Activated CD4-positive, alpha-beta T cell treated with anti-CD3 and anti-CD28 coated beads for 36 hours (primary cell): ENCODE measurements at regions of chr10 and their contacts with region 1.

Region 1: DNA sequence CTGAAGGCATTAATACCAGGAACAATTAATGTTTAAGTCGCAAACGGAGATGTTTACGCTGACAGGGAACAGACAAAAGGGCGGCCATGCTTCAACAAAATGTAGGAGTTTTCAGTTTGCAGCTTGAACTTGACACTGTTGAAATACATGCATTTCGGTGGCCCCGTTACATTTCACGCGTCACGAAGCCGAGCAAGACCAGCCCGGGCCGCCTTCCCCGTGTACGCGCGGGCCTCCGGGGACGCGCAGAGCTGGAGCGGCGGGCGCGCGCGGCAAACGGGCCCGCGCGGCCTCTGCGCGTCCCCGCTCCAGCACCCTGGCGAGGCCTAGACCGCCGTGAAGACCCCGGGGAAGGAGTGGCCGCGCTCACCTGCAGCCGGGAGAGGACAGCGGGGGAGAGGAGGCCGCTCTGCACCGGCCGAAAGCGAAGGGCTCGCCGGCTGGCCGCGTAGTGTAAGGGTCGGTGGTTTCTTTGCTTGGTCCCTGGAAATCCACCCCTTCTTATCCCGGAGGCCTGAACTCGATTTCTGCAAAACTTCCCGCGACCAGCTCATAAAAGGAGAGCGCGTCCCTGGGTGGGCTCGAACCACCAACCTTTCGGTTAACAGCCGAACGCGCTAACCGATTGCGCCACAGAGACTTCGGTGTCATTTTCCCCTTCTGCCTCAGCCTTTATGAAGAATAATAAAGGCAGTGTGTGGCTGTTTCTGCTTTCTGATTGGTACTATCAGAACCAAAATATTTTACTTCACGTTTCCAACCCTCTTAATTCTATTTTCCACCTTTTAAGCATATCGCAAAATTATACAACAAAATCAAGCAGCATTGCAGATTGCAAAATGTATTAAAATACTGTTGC is 11.4 kb upstream of the EBLN1 start:
- DNase-seq: peak; percentile 92
- ATAC-seq: peak; percentile 75
- H3K4me3 Mint-ChIP-seq: peak overlapping the region; percentile 89
- H3K27ac Mint-ChIP-seq: peak overlapping the region; percentile 90
- H3K4me1 Mint-ChIP-seq: peaks cover 20% of the 10 kb centered on the region
- H3K27me3 Mint-ChIP-seq: no peaks in the 10 kb centered on the region

Region 2: DNA sequence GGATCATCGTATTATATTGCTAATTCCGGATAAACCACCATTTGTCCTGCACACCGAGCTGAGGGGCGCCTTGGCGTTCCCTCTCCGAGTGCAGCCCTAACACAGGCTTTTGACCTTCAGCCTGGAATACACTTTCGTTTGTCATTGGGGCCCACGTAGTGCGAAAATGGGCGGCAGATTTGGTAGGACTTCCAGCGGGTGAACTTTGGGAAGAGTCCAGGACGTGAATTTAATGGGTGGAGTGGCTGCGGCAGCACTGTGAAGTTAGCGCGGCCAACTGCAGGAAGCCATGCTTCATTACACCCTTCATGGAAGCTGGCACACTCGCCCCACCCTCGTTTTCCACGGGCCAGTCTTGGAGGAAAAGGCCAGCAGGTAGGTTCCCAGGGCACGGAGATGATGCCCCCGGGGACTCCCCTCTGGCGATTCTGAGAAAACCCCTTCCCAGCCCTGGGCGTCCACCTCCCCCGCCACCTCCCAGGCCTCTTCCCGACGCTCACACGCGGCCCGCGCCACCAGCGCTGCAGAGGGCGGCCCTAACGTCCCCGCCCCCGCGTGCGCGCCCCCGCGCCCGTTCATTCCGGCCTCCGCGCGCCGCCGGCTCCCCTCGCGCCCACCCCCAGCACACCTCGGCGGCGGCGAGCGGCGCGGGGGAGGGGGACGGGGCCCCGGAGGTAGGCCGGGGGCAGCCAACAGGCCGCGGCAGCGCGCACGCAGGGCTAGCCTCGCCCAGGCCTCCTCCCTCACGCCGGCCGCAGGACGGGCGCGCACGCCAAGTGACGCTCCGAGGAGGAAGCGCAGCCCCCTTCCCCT is 695.5 kb before region 1 on chr10 and contains the start of gene MLLT10:
- CTCF ChIA-PET with region 1: no interaction called
- POLR2A ChIA-PET with region 1: no interaction called
- intact Hi-C with region 1: loop called (anchors 1 to 10 kb)
- DNase-seq: peak; percentile 95
- ATAC-seq: peak; percentile 87
- H3K4me3 Mint-ChIP-seq: peak within 1 kb of the TSS; percentile 95
- H3K27ac Mint-ChIP-seq: peak within 1 kb of the TSS; percentile 98
- H3K4me1 Mint-ChIP-seq: peaks cover 18% of the 10 kb centered on the region
- H3K27me3 Mint-ChIP-seq: no peaks in the 10 kb centered on the region
- total RNA-seq, gene MLLT10: 33.8 to 34.1 TPM

Region 3: GRCh38 chr10:21926949-21927348 is 302.2 kb before region 1 on chr10:
- CTCF ChIA-PET with region 1: no interaction called
- POLR2A ChIA-PET with region 1: no interaction called
- intact Hi-C with region 1: no loop called
- DNase-seq: no peak
- ATAC-seq: no peak
- H3K4me3 Mint-ChIP-seq: no peak overlapping the region
- H3K27ac Mint-ChIP-seq: no peak overlapping the region
- H3K4me1 Mint-ChIP-seq: no peaks in the 10 kb centered on the region
- H3K27me3 Mint-ChIP-seq: no peaks in the 10 kb centered on the region

Region 4: GRCh38 chr10:22251751-22252223 is 22.6 kb after region 1 on chr10:
- CTCF ChIA-PET with region 1: interaction called, 5 read pairs
- POLR2A ChIA-PET with region 1: interaction called, 6 read pairs
- intact Hi-C with region 1: loop called (anchors 1 kb)
- DNase-seq: peak; percentile 83
- ATAC-seq: peak; percentile 42
- H3K4me3 Mint-ChIP-seq: peak overlapping the region; percentile 93
- H3K27ac Mint-ChIP-seq: peak overlapping the region; percentile 100
- H3K4me1 Mint-ChIP-seq: peaks cover 35% of the 10 kb centered on the region
- H3K27me3 Mint-ChIP-seq: peaks cover 5% of the 10 kb centered on the region

Region 5: GRCh38 chr10:22340362-22341189 is 111.4 kb after region 1 on chr10:
- CTCF ChIA-PET with region 1: no interaction called
- POLR2A ChIA-PET with region 1: interaction called, 3 read pairs
- intact Hi-C with region 1: loop called in 1 of 2 experiments (anchors 1 kb)
- DNase-seq: peak; percentile 72
- ATAC-seq: peak; percentile 48
- H3K4me3 Mint-ChIP-seq: peak overlapping the region; percentile 78
- H3K27ac Mint-ChIP-seq: peak overlapping the region; percentile 89
- H3K4me1 Mint-ChIP-seq: peaks cover 34% of the 10 kb centered on the region
- H3K27me3 Mint-ChIP-seq: peaks cover 58% of the 10 kb centered on the region

Region 6: GRCh38 chr10:22925088-22925487 is 695.9 kb after region 1 on chr10:
- CTCF ChIA-PET with region 1: no interaction called
- POLR2A ChIA-PET with region 1: no interaction called
- intact Hi-C with region 1: no loop called
- DNase-seq: no peak
- ATAC-seq: no peak
- H3K4me3 Mint-ChIP-seq: no peak overlapping the region
- H3K27ac Mint-ChIP-seq: no peak overlapping the region
- H3K4me1 Mint-ChIP-seq: peaks cover 4% of the 10 kb centered on the region
- H3K27me3 Mint-ChIP-seq: peaks cover 5% of the 10 kb centered on the region